Gastrocnemius medialis (tissue), 4 donors: ENCODE measurements at regions of chr17 and their contacts with region 1.

Region 1: DNA sequence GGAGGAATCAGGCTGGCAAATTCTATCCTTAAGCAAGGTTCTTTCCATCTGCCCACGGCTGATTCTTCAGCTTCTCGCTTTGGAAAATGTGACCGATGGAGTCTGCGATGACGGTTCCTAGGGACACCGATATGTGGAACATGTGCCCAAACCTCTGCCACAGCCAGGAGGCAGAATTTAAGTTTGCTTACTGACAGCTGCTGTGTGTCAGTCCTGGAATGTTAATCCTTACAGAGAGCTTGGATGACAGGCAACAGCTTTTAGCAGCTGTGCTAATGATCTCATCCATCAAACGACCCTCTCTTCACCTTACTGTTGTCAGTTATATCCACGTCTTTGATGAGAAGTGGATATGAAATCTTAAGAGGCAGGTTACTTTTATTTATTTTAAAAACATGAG is 11.4 kb upstream of the MYH13 start:
- DNase-seq: peak in 1 of 2 donors; percentile 34
- ATAC-seq: peak; percentile 73 to 82
- H3K4me3 ChIP-seq: peak overlapping the region in 1 of 4 donors; percentile 4
- H3K27ac ChIP-seq: peak overlapping the region in 3 of 4 donors; percentile 2 to 43 (median 36)
- H3K4me1 ChIP-seq: no peaks in the 10 kb centered on the region
- H3K27me3 ChIP-seq: no peaks in the 10 kb centered on the region
- CTCF ChIP-seq: no peak
- POLR2A ChIP-seq: no peak

Region 2: DNA sequence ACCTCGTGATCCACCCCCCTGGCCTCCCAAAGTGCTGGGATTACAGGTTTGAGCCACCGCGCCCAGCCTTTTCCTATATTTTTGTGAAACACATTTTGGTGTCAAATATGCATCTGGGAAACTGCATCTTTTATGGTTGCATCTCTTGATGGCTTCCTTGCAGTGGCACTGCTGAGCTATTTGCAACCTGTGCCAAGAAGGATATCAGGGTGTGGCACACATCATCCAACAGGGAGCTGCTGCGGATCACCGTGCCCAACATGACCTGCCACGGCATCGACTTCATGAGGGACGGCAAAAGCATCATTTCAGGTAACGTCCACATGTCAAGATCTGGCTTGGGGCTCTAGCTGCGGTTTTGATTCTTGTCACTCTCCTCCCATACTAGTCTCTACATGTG is 755.7 kb before region 1 on chr17:
- in situ Hi-C with region 1: no loop called
- intact Hi-C with region 1: no loop called
- DNase-seq: no peak
- ATAC-seq: no peak
- H3K4me3 ChIP-seq: no peak overlapping the region
- H3K27ac ChIP-seq: no peak overlapping the region
- H3K4me1 ChIP-seq: no peaks in the 10 kb centered on the region
- H3K27me3 ChIP-seq: no peaks in the 10 kb centered on the region
- CTCF ChIP-seq: no peak
- POLR2A ChIP-seq: no peak

Region 3: DNA sequence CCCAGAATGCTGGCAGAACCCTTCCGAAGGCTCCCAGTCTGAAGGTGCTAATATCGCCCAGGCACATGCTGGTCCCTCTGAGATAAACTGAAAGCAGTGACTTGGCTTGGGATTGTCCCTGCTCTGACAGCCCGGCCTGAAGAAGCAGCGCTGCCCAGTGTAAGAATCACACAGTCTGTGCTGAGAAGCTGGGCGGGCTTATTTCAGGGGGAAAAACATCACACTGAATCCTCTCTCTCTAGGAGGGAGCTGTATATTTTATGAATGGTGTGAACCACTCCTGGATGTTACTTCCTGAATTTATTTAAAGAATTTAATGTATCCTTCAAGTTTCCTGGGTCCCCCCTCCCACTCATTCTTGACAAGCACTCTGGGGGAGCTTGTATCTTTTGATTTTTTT is 222.1 kb before region 1 on chr17:
- in situ Hi-C with region 1: no loop called
- intact Hi-C with region 1: no loop called
- DNase-seq: no peak
- ATAC-seq: no peak
- H3K4me3 ChIP-seq: no peak overlapping the region
- H3K27ac ChIP-seq: peak overlapping the region in 1 of 4 donors; percentile 9
- H3K4me1 ChIP-seq: no peaks in the 10 kb centered on the region
- H3K27me3 ChIP-seq: no peaks in the 10 kb centered on the region
- CTCF ChIP-seq: no peak
- POLR2A ChIP-seq: no peak

Region 4: DNA sequence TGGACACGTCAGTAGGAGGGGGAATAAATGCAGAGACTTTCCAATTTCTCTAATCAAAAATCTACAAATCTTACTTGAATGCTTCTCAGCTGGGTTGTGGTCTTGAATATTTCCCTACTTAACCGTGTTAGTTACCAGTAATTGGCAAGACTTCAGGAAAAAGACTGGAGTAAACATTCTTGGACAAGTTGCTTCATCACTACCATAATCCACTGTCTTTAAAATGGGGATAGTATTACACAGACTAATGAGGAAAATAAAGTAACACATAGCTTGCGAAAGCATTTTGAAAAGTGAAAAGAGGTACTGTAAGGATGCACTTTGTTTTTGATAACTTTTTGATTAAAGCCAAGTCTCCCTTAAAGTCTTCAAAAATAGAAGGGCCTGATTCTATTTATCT is 115.8 kb after region 1 on chr17:
- in situ Hi-C with region 1: loop called in 1 of 4 experiments (anchors 25 kb)
- intact Hi-C with region 1: no loop called
- DNase-seq: no peak
- ATAC-seq: peak in 1 of 2 donors; percentile 65
- H3K4me3 ChIP-seq: no peak overlapping the region
- H3K27ac ChIP-seq: peak overlapping the region in 2 of 4 donors; percentile 52 to 58
- H3K4me1 ChIP-seq: no peaks in the 10 kb centered on the region
- H3K27me3 ChIP-seq: no peaks in the 10 kb centered on the region
- CTCF ChIP-seq: no peak
- POLR2A ChIP-seq: no peak